ENCODE measurements at regions of chrX and their contacts with region 1.

Region 1: DNA sequence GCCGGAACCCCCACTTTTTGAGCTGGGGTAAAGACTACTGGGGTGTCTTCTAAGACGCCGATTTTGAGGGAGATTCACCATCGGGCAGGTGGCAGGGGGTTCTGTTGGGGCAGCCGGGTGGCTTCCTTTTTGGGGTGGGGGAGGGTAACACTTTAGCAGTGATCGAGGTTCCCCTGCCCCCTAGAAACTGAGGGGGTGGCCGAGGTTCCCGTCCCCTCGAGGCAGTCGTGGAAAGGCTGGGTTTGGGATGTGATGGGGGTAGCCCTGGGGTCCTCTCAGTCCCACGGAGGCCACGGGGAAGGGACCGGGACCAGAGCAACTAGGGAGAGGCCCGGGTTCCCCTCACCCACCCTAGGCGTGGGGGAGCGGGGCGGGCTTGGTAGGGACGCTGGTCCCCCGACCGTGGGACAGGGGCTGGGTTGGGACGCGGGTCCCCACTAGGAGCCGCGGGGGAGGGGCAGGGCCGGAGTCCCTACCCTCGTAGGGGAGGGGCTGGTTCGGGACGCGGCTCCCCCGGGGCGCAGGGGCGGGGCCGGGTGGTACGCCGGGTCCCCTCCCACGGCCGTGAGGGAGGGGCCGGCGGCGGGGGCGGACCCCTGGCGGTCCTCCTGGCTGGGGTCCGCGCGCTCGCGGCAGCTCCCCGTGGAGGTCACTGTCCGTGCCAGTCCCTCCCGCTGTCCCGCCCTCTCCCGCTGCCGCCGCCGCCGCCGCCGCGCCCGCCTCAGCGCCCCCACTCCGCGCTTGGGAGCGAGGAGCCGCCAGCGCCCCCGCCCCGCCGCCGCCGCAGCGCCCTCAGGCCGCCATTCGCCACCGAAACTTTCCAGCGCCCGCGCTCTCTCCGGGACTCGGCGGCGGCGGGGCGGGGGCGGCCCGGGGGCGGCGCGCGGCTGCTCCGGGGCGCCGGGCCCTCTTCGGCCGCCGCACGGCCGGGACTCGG is at the start of gene TBL1X:
- DNase-seq: peak; percentile 42
- H3K4me3 Mint-ChIP-seq: peak within 1 kb of the TSS; percentile 69
- H3K27ac Mint-ChIP-seq: peak within 1 kb of the TSS; percentile 76
- H3K4me1 Mint-ChIP-seq: peaks cover 32% of the 10 kb centered on the region
- H3K27me3 Mint-ChIP-seq: no peaks in the 10 kb centered on the region
- total RNA-seq, gene TBL1X: 49.0 and 53.2 TPM in 2 replicates

Region 2: GRCh38 chrX:8971116-8971515 is 493.6 kb before region 1 on chrX:
- intact Hi-C with region 1: loop called (anchors 10 kb)
- DNase-seq: no peak
- H3K4me3 Mint-ChIP-seq: no peak overlapping the region
- H3K27ac Mint-ChIP-seq: no peak overlapping the region
- H3K4me1 Mint-ChIP-seq: peaks cover 5% of the 10 kb centered on the region
- H3K27me3 Mint-ChIP-seq: peaks cover 1% of the 10 kb centered on the region

Region 3: DNA sequence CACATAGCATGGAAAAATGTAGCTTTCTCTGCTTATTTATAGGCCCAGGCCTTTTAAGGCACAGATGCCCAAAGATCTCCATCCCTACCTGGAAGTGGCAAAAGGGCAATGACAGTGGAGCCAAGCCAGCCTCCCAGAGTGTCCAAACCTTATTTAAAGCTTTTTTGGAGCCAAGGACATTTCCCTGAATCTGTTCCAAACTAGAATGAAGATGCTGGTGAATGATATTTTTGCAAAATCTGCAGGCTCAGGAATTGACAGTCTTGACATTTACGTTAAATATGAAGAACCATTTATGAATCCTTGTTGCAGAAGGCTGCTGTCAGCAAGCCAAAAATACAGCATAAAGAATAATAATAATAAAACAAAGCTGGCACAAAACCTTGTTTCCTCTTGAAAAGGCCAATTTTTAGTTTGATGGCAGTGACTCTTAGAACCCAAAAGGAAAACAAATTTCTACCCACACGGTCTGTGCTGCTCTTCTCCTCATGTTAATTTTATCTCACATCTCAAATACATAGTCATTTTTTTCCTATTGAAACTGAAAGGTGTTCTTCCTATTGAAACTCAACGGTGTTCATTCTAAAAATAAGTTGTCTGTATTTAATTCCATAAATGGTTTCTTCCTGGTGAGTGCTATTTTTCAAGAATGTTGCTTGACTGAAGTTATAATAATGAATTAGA is 206.1 kb before region 1 on chrX:
- intact Hi-C with region 1: loop called (anchors 10 kb)
- DNase-seq: no peak
- H3K4me3 Mint-ChIP-seq: no peak overlapping the region
- H3K27ac Mint-ChIP-seq: peak overlapping the region; percentile 84
- H3K4me1 Mint-ChIP-seq: peaks cover 37% of the 10 kb centered on the region
- H3K27me3 Mint-ChIP-seq: no peaks in the 10 kb centered on the region

Region 4: GRCh38 chrX:9355739-9356138 is 109.0 kb before region 1 on chrX:
- intact Hi-C with region 1: no loop called
- DNase-seq: no peak
- H3K4me3 Mint-ChIP-seq: no peak overlapping the region
- H3K27ac Mint-ChIP-seq: peak overlapping the region; percentile 46
- H3K4me1 Mint-ChIP-seq: peaks cover 39% of the 10 kb centered on the region
- H3K27me3 Mint-ChIP-seq: no peaks in the 10 kb centered on the region

Region 5: DNA sequence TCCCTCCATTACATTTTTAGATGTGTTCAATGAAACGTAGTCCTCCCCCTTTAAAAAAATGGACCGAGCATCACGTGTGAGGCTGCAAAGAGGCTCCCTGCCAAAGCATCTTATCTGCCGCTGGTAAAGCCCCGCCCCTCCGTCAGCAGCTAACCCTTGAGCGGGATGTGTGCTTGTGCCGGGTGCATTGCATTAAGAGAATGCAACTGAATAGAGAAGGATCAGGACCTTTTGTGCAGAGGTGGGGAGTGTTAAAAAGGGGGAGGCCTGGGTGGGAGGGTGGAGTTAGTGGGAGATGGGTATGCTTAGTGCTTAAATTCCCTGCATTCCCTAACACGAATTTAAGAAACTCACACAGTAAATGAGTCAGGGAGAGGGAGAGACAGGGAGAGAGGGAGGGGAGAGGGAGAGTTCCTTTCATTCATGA is 66.2 kb after region 1 on chrX:
- intact Hi-C with region 1: loop called (anchors 10 kb)
- DNase-seq: peak; percentile 49
- H3K4me3 Mint-ChIP-seq: peak overlapping the region; percentile 62
- H3K27ac Mint-ChIP-seq: peak overlapping the region; percentile 18
- H3K4me1 Mint-ChIP-seq: peaks cover 29% of the 10 kb centered on the region
- H3K27me3 Mint-ChIP-seq: no peaks in the 10 kb centered on the region

Region 6: DNA sequence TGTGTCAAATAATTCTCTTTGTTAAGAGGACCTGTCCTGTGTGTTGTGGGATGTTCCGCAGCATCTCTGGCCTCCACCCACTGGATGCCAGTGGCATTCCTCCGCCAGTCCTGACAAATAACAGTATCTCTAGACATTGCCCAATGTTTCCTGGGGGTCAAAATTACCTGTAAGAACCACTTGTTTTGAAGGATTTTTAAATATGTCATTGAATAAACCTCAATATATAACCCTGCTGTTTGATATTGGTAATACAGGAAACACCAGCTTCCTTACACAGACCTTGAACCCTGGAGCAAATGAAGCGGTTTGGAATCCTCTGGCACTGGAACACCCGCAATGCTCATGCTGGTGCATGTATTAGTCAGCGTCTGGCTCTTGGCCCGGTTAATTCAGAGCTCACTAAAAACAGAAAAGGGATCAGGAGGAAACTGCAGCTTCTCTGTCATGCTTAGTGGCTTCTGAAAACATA is 101.5 kb after region 1 on chrX:
- intact Hi-C with region 1: no loop called
- DNase-seq: no peak
- H3K4me3 Mint-ChIP-seq: peak overlapping the region; percentile 2
- H3K27ac Mint-ChIP-seq: no peak overlapping the region
- H3K4me1 Mint-ChIP-seq: peaks cover 25% of the 10 kb centered on the region
- H3K27me3 Mint-ChIP-seq: no peaks in the 10 kb centered on the region

Region 7: GRCh38 chrX:9677098-9677739 is 212.5 kb after region 1 on chrX:
- intact Hi-C with region 1: loop called (anchors 1 kb)
- DNase-seq: peak; percentile 36
- H3K4me3 Mint-ChIP-seq: peak overlapping the region; percentile 37
- H3K27ac Mint-ChIP-seq: peak overlapping the region; percentile 71
- H3K4me1 Mint-ChIP-seq: peaks cover 29% of the 10 kb centered on the region
- H3K27me3 Mint-ChIP-seq: no peaks in the 10 kb centered on the region

Region 8: DNA sequence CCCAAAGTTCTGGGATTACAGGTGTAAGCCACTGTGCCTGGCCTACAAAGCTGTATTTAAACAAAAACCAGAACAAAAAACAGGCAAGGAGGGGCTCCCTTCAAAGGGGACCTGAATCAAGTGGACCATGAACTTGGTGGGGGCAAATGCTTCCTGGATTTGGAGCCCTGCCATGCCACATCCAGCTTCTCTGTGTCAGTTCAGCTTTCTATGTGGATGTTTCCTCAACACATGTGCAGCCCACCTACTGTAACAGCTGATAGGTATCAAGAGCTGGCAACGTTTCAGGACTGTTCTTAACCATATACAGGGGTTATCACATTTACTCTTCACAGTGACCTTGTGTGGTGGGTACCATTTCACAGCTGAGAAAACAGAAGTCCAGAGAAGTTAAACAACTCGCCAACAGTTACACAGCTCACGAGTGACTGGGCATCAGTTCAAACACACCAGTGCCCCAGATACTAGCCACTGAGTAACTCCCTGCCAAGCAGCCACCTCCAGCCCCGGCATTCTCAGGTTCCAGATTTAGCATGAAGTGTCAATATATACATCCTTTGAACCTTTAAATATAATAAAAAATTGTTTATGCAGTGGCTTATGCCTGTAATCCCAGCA is 293.4 kb after region 1 on chrX:
- intact Hi-C with region 1: no loop called
- DNase-seq: no peak
- H3K4me3 Mint-ChIP-seq: no peak overlapping the region
- H3K27ac Mint-ChIP-seq: no peak overlapping the region
- H3K4me1 Mint-ChIP-seq: no peaks in the 10 kb centered on the region
- H3K27me3 Mint-ChIP-seq: peaks cover 5% of the 10 kb centered on the region

Region 9: GRCh38 chrX:10001496-10001895 is 536.8 kb after region 1 on chrX:
- intact Hi-C with region 1: loop called (anchors 5 kb)
- DNase-seq: no peak
- H3K4me3 Mint-ChIP-seq: no peak overlapping the region
- H3K27ac Mint-ChIP-seq: no peak overlapping the region
- H3K4me1 Mint-ChIP-seq: peaks cover 35% of the 10 kb centered on the region
- H3K27me3 Mint-ChIP-seq: no peaks in the 10 kb centered on the region

Region 10: DNA sequence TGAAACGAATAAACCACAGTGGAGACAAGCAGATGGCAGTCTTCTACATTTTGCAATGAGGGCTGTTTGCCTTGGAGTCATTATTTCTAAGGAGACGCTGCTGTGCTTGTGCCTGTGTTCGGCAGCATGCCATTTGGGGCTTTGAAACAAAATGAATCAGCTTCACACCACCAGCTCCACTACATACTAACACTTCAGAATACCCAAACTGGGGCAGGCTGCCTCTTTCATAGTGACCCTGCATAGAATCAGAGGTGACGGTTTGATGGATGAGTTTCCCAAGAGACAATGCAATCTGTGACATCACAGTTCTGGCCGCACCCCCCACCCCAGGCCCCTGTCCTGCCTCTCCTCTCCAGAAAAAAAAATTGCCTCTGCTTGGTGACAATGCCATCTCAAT is 1212.8 kb after region 1 on chrX:
- intact Hi-C with region 1: no loop called
- DNase-seq: no peak
- H3K4me3 Mint-ChIP-seq: no peak overlapping the region
- H3K27ac Mint-ChIP-seq: no peak overlapping the region
- H3K4me1 Mint-ChIP-seq: no peaks in the 10 kb centered on the region
- H3K27me3 Mint-ChIP-seq: no peaks in the 10 kb centered on the region